ENCODE measurements at regions of chr1 and their contacts with region 1.

Region 1: DNA sequence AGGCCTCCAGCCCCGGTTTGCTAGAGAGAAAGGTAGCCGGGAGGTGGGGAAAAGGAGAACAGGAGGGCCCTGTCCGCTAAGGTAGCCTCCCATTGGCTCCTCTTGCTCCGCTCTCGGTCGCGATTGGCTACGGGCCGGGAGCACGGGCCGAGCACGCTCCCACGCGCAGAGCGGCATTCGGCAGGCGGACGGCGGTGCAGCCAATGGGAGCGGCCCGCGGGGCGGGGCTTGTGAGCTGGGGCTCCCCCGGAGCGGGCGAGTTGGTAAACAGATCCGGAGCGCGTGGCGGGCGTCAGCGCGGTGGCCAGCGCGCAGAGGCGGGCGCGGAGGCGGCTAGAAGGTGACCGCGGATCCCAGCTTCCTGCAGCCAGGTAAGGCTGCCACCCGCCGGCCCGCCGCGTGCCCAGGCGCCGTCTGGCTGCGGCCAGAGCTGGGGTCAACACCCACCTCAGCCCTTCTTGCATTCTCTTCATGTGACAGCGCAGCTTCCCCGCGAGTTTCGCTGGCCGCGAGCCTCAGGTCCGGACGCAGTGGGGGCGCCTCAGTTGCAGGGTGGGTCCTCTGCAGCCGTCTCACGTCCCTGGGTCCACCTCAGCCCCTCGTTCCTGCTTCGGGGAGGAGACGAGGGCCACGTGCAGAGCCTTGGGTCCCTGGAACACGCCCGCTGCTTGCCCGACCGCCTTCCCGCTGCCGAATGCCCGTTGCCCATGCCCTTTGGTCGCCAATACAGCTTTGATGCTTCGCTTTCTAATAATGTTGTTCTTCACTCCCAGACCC is at the start of gene COQ8A:
- DNase-seq: peak; percentile 99
- H3K4me3 ChIP-seq: peak within 1 kb of the TSS; percentile 64 to 77
- H3K27ac ChIP-seq: peak within 1 kb of the TSS; percentile 94 to 95
- H3K4me1 ChIP-seq: peaks cover 10% of the 10 kb centered on the region
- H3K27me3 ChIP-seq: no peaks in the 10 kb centered on the region
- CTCF ChIP-seq: peak in 2 of 4 experiments; percentile 21 to 48
- POLR2A ChIP-seq: no peak
- total RNA-seq, gene COQ8A: 61.8 to 66.1 TPM

Region 2: GRCh38 chr1:226778657-226779058 is 161.6 kb before region 1 on chr1:
- intact Hi-C with region 1: no loop called
- DNase-seq: peak; percentile 71
- H3K4me3 ChIP-seq: no peak overlapping the region
- H3K27ac ChIP-seq: peak overlapping the region; percentile 43 to 55
- H3K4me1 ChIP-seq: no peaks in the 10 kb centered on the region
- H3K27me3 ChIP-seq: no peaks in the 10 kb centered on the region
- CTCF ChIP-seq: no peak
- POLR2A ChIP-seq: peak; percentile 11

Region 3: GRCh38 chr1:226870401-226871279 is 69.6 kb before region 1 on chr1 and contains the start of gene PSEN2:
- intact Hi-C with region 1: loop called (anchors 2 kb)
- DNase-seq: peak; percentile 61
- H3K4me3 ChIP-seq: peak within 1 kb of the TSS; percentile 73 to 87
- H3K27ac ChIP-seq: peak within 1 kb of the TSS; percentile 66 to 83
- H3K4me1 ChIP-seq: peaks cover 8% of the 10 kb centered on the region
- H3K27me3 ChIP-seq: no peaks in the 10 kb centered on the region
- CTCF ChIP-seq: peak in 3 of 4 experiments; percentile 18 to 44 (median 40)
- POLR2A ChIP-seq: peak; percentile 49
- total RNA-seq, gene PSEN2: 45.3 to 78.3 TPM

Region 4: DNA sequence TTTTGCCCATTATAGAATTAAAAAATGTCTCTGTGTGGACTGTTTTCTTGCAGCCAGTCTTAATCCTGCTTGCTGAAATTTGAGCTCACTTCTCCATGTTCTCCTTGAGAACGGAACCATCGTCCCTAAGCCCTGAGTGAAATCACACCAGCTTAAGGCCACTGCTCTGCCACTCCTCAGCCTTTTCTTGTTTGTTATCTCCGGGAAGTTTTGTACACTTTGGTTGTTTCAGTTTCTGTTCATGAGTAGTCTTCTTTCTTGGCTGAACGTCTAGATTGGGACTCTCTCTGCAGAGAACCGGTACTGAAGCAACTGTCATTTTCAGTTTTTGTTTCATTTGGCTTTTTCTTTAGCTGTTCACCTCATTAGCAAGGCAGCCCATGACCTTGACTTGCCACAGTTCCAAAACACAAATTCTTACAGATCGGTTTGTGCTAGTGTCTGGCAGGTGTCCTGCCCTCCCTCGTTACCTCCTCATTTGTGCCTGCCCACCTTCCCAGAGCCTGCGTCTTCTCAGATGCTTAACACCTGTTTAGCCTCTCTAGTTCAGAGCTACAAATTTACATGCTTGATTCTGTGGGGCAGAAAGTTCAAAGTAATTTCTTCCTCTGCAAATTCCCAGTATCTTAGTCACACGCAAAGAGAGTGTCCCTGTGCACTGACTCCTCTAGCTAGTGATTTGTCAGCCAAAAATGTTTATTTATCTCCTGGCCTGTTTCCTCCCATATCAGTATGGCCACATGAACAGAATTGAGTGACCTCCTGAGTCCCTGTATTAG is 57.4 kb before region 1 on chr1:
- intact Hi-C with region 1: no loop called
- DNase-seq: no peak
- H3K4me3 ChIP-seq: peak overlapping the region; percentile 3 to 13
- H3K27ac ChIP-seq: peak overlapping the region; percentile 61 to 68
- H3K4me1 ChIP-seq: peaks cover 20% of the 10 kb centered on the region
- H3K27me3 ChIP-seq: no peaks in the 10 kb centered on the region
- CTCF ChIP-seq: no peak
- POLR2A ChIP-seq: no peak

Region 5: DNA sequence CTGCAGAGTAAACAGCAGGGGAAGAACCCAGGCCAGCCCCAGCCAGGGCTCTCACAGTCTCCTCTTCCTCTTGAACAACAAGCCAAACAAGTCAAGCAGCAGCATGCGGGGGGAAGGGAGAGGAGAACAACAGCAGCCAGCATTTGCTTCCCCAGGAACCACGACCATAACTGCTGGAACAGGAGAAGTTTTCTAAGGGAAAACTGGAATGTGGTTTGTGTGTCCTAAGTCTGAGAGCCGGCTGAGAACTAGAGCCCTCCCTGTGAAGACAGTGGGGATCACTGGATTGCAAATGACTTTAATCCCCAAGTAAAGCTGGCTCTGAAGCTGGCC is 48.1 kb after region 1 on chr1:
- intact Hi-C with region 1: loop called (anchors 5 kb)
- DNase-seq: peak; percentile 89
- H3K4me3 ChIP-seq: no peak overlapping the region
- H3K27ac ChIP-seq: peak overlapping the region; percentile 66 to 81
- H3K4me1 ChIP-seq: peaks cover 22% of the 10 kb centered on the region
- H3K27me3 ChIP-seq: no peaks in the 10 kb centered on the region
- CTCF ChIP-seq: no peak
- POLR2A ChIP-seq: no peak

Region 6: DNA sequence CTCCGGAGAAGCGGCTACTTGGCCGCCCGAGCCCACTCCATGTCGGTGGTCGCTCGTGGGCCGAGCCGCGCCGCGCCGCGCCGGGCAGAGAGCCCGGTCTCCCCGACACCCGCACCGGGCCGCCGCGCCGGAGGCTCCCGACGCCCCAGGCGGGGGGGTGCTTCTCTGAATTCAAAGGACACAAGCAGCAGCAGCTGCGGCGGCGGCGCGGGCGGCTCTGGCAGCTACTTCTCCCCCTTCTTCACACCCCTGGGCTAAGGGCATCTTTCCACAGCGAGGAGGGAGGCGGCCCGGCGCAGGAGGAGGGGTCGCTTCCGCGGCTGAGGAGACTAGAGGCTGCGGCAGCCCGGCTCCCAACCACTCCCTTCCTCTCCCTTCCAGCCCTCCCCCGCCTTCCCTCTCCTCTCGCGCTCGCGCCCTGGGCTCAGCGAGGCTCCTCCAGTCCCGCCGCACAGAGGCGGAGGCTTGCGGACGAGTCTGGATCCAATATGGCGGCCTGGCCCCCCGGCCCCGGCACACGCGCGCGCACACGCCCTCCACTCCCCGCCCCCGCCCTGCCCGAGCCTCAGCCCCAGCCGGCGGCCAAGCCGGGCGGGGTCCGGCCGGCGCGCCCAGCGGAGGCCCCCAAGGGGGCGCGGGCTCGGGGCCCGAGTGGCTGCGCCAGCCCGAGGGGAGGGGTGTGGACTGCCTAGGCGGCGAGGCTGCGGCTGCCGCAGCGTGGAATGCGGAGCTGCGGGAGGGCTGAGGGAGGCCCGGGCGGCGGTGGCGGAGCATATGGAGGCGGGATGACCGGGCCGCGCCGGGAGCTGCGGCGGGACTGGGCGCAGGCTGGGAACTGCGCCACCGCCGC is 378.0 kb after region 1 on chr1 and contains the start of gene CDC42BPA:
- intact Hi-C with region 1: loop called (anchors 10 kb)
- DNase-seq: peak; percentile 65
- H3K4me3 ChIP-seq: peak within 1 kb of the TSS; percentile 81 to 86
- H3K27ac ChIP-seq: peak within 1 kb of the TSS; percentile 94 to 97
- H3K4me1 ChIP-seq: no peaks in the 10 kb centered on the region
- H3K27me3 ChIP-seq: no peaks in the 10 kb centered on the region
- CTCF ChIP-seq: peak in 1 of 4 experiments; percentile 6
- POLR2A ChIP-seq: peak; percentile 22
- total RNA-seq, gene CDC42BPA: 31.3 to 76.9 TPM